Esophagus muscularis mucosa (tissue), 4 donors: ENCODE measurements at regions of chr3 and their contacts with region 1.

Region 1: DNA sequence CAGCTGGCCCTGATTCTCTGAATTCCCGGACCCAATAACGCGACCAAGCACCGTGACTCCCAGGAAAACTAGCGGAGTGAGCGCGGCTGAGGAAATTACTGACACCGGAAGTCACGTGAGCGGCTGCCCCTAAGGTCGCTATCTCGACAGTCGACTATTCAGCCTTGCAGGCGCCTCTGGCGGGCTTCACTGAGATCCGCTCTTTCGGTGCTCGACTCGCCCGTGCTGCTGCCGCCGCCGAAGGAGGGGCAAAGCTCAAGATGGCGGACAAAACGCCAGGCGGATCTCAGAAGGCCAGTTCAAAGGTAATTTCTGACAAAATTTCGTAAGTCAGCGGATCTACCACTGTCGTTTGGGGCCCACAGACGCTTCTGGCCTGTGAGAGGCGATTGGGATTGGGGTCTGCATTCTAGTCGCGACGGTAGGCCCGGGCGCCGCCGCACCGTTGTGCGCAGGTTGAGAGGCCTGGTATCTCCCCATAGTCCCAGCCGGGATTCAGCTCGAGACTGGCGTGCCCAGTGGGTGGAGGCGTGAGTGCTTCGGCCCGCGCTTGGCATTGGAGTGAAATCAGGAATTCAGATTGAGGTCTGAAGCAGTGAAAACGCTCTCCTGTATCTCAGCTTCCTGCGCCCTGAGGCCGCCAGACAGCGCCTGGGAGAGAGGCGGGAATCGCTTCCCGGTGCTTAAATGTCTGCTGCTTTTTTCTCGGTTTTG is at the start of gene U2SURP:
- DNase-seq: peak; percentile 98
- H3K4me3 ChIP-seq: peak within 1 kb of the TSS; percentile 78 to 98 (median 91)
- H3K27ac ChIP-seq: peak within 1 kb of the TSS; percentile 87 to 95 (median 90)
- H3K4me1 ChIP-seq: peaks cover 41 to 60% (median 58%) of the 10 kb centered on the region in 4 donors
- H3K27me3 ChIP-seq: no peaks in the 10 kb centered on the region
- CTCF ChIP-seq: peak in 2 of 3 experiments; percentile 25 to 27
- EP300 ChIP-seq: no peak
- POLR2A ChIP-seq: peak; percentile 16
- total RNA-seq, gene U2SURP: 35.7 to 58.6 (median 45.2) TPM

Region 2: DNA sequence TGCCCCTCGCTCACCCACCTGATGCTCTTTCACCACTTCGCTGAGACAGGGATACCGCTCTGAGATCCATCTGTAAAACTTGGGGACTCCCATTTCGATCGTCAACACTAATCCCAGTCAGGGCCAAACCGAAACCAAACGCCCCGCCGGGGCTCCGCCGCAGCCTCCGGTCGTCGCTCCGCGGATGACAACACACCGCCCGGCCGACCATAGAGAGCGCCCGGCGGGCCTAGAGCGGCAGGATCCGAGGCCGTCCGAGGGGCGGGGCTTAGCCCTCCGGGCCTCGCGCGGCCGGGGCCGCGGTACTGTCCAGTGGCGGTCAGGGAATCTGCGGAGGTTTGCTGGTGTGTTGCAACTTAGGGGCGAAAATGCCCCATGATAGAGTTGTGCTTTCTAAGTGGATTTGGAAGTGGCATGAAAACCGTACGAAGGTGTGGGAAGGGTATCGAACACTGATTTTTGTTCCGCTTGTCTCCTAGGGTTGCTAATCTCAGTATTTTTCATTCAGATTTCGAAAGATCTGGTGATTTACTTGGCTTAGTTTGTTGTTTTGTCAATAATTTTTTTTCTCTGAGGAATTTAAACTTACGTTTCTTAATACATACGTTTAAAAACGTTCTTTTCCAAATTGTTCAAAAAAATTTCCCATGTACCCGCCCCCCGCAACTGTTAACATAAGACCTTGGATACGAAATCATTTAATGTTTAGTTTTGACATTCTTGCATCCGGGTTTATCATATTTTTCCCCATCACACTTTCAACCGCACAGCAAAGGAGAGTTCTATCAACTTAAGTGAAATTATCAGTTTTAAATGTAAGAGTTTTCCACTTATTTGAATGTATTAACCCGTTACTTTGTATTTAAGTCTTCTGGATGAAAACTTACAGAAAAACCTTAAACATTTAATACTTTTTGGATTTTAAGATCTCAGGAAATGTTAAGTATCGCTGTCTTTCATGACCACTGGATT is 553.4 kb before region 1 on chr3 and contains the start of gene XRN1:
- intact Hi-C with region 1: loop called (anchors 10 kb)
- DNase-seq: peak; percentile 96
- H3K4me3 ChIP-seq: peak within 1 kb of the TSS; percentile 93 to 98 (median 96)
- H3K27ac ChIP-seq: peak within 1 kb of the TSS; percentile 98 to 99 (median 98)
- H3K4me1 ChIP-seq: peaks cover 20 to 43% (median 41%) of the 10 kb centered on the region in 4 donors
- H3K27me3 ChIP-seq: no peaks in the 10 kb centered on the region
- CTCF ChIP-seq: no peak
- EP300 ChIP-seq: no peak
- POLR2A ChIP-seq: no peak
- total RNA-seq, gene XRN1: 31.4 to 40.7 (median 34.9) TPM

Region 3: GRCh38 chr3:142578327-142579223 is 423.0 kb before region 1 on chr3 and contains the start of gene ATR:
- intact Hi-C with region 1: loop called (anchors 2 kb)
- DNase-seq: peak; percentile 99
- H3K4me3 ChIP-seq: peak within 1 kb of the TSS; percentile 77 to 92 (median 80)
- H3K27ac ChIP-seq: peak within 1 kb of the TSS; percentile 84 to 96 (median 88)
- H3K4me1 ChIP-seq: peaks cover 17 to 30% (median 22%) of the 10 kb centered on the region in 4 donors
- H3K27me3 ChIP-seq: no peaks in the 10 kb centered on the region
- CTCF ChIP-seq: no peak
- EP300 ChIP-seq: no peak
- POLR2A ChIP-seq: peak; percentile 13
- total RNA-seq, gene ATR: 9.5 to 16.6 (median 13.3) TPM